Activated CD4-positive, alpha-beta memory T cell treated with anti-CD3 and anti-CD28 coated beads, Interleukin-2, amount 10 ng/mL, durations not matched to agents 7 days and 5 days (primary cell): ENCODE measurements at regions of chr16 and their contacts with region 1.

Region 1: GRCh38 chr16:69123910-69124309 is 8.5 kb downstream of the CHTF8 start:
- DNase-seq: peak; percentile 67
- H3K4me3 Mint-ChIP-seq: no peak overlapping the region
- H3K27ac Mint-ChIP-seq: no peak overlapping the region
- H3K4me1 Mint-ChIP-seq: peaks cover 12% of the 10 kb centered on the region
- H3K27me3 Mint-ChIP-seq: no peaks in the 10 kb centered on the region

Region 2: GRCh38 chr16:68528686-68529379 is 595.1 kb before region 1 on chr16:
- CTCF ChIA-PET with region 1: interaction called, 21 read pairs
- POLR2A ChIA-PET with region 1: no interaction called
- DNase-seq: peak; percentile 91
- H3K4me3 Mint-ChIP-seq: peak overlapping the region; percentile 61
- H3K27ac Mint-ChIP-seq: no peak overlapping the region
- H3K4me1 Mint-ChIP-seq: peaks cover 25% of the 10 kb centered on the region
- H3K27me3 Mint-ChIP-seq: no peaks in the 10 kb centered on the region

Region 3: GRCh38 chr16:68627951-68628425 is 495.9 kb before region 1 on chr16:
- CTCF ChIA-PET with region 1: no interaction called
- POLR2A ChIA-PET with region 1: no interaction called
- DNase-seq: no peak
- H3K4me3 Mint-ChIP-seq: no peak overlapping the region
- H3K27ac Mint-ChIP-seq: no peak overlapping the region
- H3K4me1 Mint-ChIP-seq: no peaks in the 10 kb centered on the region
- H3K27me3 Mint-ChIP-seq: peaks cover 10% of the 10 kb centered on the region

Region 4: DNA sequence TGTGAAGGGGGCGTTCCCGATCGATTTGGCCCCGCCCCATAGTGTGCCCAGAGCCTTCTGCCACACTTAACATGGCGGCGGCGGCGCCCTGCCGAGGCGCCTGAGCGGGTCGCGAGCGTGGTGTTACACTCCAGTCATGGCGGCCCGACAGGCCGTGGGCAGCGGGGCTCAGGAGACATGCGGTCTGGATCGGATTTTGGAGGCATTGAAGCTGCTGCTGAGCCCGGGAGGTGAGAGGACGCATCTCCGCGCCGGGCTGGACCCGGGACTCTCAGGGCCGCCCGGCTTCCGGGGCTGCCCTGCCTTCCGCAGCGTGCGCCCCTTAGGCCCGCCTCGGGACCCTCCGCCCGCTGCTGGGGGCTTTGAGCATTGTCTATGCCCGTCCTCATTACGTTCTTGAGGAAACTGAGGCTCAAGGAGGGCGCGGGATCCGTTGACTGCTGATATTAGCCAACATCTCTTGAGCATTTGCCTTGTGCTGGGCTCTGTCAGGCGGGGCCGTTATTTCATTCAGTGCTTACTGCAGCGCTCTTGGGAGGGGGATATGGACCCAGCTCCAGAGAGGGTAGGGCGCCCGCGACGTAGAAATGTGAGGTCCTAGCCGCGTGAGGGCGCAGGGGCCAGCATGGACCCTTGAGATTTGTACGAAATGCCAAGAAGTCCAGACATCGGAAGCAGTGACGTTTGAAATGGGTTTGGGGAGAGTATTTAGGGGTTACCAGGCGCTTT is 280.3 kb before region 1 on chr16 and contains the start of gene TANGO6:
- CTCF ChIA-PET with region 1: interaction called, 34 read pairs
- POLR2A ChIA-PET with region 1: interaction called, 5 read pairs
- DNase-seq: peak; percentile 89
- H3K4me3 Mint-ChIP-seq: peak within 1 kb of the TSS; percentile 97
- H3K27ac Mint-ChIP-seq: peak within 1 kb of the TSS; percentile 82
- H3K4me1 Mint-ChIP-seq: peaks cover 35% of the 10 kb centered on the region
- H3K27me3 Mint-ChIP-seq: no peaks in the 10 kb centered on the region
- total RNA-seq, gene TANGO6: 20.7 to 22.3 TPM

Region 5: GRCh38 chr16:68902008-68902968 is 221.6 kb before region 1 on chr16:
- CTCF ChIA-PET with region 1: interaction called, 10 read pairs
- POLR2A ChIA-PET with region 1: no interaction called
- DNase-seq: peak; percentile 22
- H3K4me3 Mint-ChIP-seq: no peak overlapping the region
- H3K27ac Mint-ChIP-seq: no peak overlapping the region
- H3K4me1 Mint-ChIP-seq: no peaks in the 10 kb centered on the region
- H3K27me3 Mint-ChIP-seq: no peaks in the 10 kb centered on the region

Region 6: GRCh38 chr16:69003500-69003899 is 120.4 kb before region 1 on chr16:
- CTCF ChIA-PET with region 1: no interaction called
- POLR2A ChIA-PET with region 1: no interaction called
- DNase-seq: no peak
- H3K4me3 Mint-ChIP-seq: no peak overlapping the region
- H3K27ac Mint-ChIP-seq: no peak overlapping the region
- H3K4me1 Mint-ChIP-seq: no peaks in the 10 kb centered on the region
- H3K27me3 Mint-ChIP-seq: no peaks in the 10 kb centered on the region

Region 7: GRCh38 chr16:69105489-69106361 is 18.2 kb before region 1 on chr16 and contains the start of gene HAS3:
- CTCF ChIA-PET with region 1: interaction called, 15 read pairs
- POLR2A ChIA-PET with region 1: interaction called, 4 read pairs
- DNase-seq: peak; percentile 36
- H3K4me3 Mint-ChIP-seq: peak within 1 kb of the TSS; percentile 69
- H3K27ac Mint-ChIP-seq: no peak within 1 kb of the TSS
- H3K4me1 Mint-ChIP-seq: peaks cover 15% of the 10 kb centered on the region
- H3K27me3 Mint-ChIP-seq: peaks cover 44% of the 10 kb centered on the region
- total RNA-seq, gene HAS3: 0.38 to 0.71 TPM

Region 8: DNA sequence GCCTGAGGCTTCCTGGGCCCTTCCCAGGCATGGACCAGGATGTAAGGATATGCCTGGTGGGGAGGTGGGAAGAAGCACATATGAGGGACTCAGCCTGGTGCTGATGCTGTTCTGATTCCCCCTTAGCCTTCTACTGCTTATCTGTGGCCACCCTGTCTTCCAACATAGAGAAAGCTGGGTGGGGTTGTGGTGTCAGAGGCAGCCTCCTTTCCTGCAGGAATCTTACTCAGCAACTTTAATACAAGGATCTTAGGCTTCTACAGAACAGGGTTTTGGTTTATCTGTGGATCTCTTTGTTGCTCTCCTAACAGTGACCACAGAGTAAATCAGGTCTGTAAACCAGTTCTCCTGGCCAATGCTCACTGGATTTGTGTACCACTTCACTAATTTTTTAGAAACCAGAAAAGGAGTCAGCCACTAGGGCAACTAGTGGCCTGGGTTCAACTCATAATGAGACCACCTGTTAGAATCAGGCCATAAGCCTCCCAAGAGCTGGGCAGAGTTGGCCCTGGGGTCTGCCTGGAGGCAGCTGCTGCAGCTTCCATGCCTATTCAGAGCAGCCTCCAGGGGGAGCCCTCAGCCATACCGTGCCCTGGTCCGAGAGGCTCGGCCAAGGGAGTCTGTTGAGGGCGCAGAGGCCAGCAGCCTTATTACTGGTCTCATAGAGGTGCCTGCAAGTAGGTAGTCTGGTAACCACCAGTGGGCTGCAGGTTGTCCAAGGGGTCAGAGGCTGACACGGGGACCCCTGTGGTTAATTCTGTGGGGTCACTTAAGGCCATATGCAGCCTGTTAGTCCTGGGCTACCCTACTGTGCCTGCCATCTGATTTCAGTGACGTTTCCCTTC is 11.4 kb before region 1 on chr16:
- CTCF ChIA-PET with region 1: interaction called, 41 read pairs
- POLR2A ChIA-PET with region 1: interaction called, 4 read pairs
- DNase-seq: peak; percentile 46
- H3K4me3 Mint-ChIP-seq: no peak overlapping the region
- H3K27ac Mint-ChIP-seq: no peak overlapping the region
- H3K4me1 Mint-ChIP-seq: peaks cover 3% of the 10 kb centered on the region
- H3K27me3 Mint-ChIP-seq: peaks cover 9% of the 10 kb centered on the region

Region 9: GRCh38 chr16:69250081-69250480 is 126.2 kb after region 1 on chr16:
- CTCF ChIA-PET with region 1: no interaction called
- POLR2A ChIA-PET with region 1: no interaction called
- DNase-seq: no peak
- H3K4me3 Mint-ChIP-seq: no peak overlapping the region
- H3K27ac Mint-ChIP-seq: no peak overlapping the region
- H3K4me1 Mint-ChIP-seq: peaks cover 11% of the 10 kb centered on the region
- H3K27me3 Mint-ChIP-seq: no peaks in the 10 kb centered on the region